PC-9 (cell line): ENCODE measurements at regions of chr4 and their contacts with region 1.

Region 1: DNA sequence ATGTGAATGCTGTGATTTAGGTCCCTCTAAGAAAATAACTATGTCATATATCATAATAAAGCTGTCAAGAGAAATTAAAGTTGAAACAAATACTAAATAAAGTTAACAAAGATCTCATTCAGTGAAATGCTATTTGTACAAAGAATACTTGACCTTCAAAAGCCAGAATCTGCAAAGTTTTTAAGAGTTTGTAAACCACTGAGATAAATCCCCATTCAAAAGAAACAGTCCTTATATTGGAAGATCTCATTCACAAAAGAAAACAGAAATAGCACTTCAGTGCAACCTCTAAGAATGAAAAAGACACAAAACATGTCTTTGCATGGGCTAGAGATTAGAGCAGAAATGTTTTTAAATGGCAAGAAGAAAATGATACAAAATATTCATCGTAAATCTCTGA is 149.1 kb upstream of the USP38 start:
- DNase-seq: no peak
- H3K4me3 ChIP-seq: no peak overlapping the region
- H3K27ac ChIP-seq: no peak overlapping the region
- H3K4me1 ChIP-seq: no peaks in the 10 kb centered on the region
- H3K27me3 ChIP-seq: no peaks in the 10 kb centered on the region
- CTCF ChIP-seq: no peak

Region 2: GRCh38 chr4:143118663-143119062 is 83.0 kb after region 1 on chr4:
- CTCF ChIA-PET with region 1: no interaction called
- POLR2A ChIA-PET with region 1: no interaction called
- intact Hi-C with region 1: loop called (anchors 2 kb)
- DNase-seq: no peak
- H3K4me3 ChIP-seq: no peak overlapping the region
- H3K27ac ChIP-seq: no peak overlapping the region
- H3K4me1 ChIP-seq: no peaks in the 10 kb centered on the region
- H3K27me3 ChIP-seq: no peaks in the 10 kb centered on the region
- CTCF ChIP-seq: no peak